ENCODE measurements at regions of chrX and their contacts with region 1.

Region 1: GRCh38 chrX:24498975-24499374 is 33.9 kb downstream of the PDK3 start:
- DNase-seq: peak; percentile 43
- H3K4me3 Mint-ChIP-seq: no peak overlapping the region
- H3K27ac Mint-ChIP-seq: no peak overlapping the region
- H3K4me1 Mint-ChIP-seq: no peaks in the 10 kb centered on the region
- H3K27me3 Mint-ChIP-seq: peaks cover 31% of the 10 kb centered on the region
- CTCF ChIP-seq: peak; percentile 63

Region 2: DNA sequence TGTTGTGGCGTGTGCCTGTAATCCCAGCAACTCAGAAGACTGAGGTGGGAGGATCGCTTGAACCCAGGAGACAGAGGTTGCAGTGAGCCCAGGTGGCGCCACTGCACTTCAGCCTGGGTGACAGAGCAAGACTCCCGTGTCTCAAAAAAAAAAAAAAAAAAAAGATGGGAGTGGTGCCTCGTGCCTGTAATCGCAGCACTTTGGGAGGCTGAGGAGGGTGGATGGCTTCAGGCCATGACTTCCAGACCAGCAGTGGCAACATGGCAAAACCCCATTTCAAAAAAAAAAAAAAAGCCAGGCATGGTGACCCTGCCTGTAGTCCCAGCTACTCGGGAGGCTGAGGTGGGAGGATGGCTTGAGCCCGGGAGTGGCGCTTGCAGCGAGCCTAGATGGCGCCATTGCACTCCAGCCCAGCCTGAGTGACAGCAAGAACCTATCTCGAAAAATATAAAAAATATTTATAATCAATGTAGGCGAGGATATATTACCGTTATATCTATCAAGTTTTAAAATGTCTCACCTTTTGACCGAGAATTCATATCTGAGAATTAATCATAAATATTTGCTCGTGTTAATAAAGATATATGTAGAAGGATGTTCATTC is 417.2 kb before region 1 on chrX:
- CTCF ChIA-PET with region 1: no interaction called
- POLR2A ChIA-PET with region 1: no interaction called
- intact Hi-C with region 1: loop called (anchors 2 kb)
- DNase-seq: peak; percentile 84
- H3K4me3 Mint-ChIP-seq: peak overlapping the region; percentile 21
- H3K27ac Mint-ChIP-seq: no peak overlapping the region
- H3K4me1 Mint-ChIP-seq: no peaks in the 10 kb centered on the region
- H3K27me3 Mint-ChIP-seq: no peaks in the 10 kb centered on the region
- CTCF ChIP-seq: peak; percentile 65

Region 3: GRCh38 chrX:24259544-24260240 is 239.3 kb before region 1 on chrX:
- CTCF ChIA-PET with region 1: interaction called, 43 read pairs
- POLR2A ChIA-PET with region 1: interaction called, 8 read pairs
- intact Hi-C with region 1: loop called (anchors 1 kb)
- DNase-seq: peak; percentile 81
- H3K4me3 Mint-ChIP-seq: no peak overlapping the region
- H3K27ac Mint-ChIP-seq: no peak overlapping the region
- H3K4me1 Mint-ChIP-seq: no peaks in the 10 kb centered on the region
- H3K27me3 Mint-ChIP-seq: peaks cover 78% of the 10 kb centered on the region
- CTCF ChIP-seq: peak; percentile 69

Region 4: DNA sequence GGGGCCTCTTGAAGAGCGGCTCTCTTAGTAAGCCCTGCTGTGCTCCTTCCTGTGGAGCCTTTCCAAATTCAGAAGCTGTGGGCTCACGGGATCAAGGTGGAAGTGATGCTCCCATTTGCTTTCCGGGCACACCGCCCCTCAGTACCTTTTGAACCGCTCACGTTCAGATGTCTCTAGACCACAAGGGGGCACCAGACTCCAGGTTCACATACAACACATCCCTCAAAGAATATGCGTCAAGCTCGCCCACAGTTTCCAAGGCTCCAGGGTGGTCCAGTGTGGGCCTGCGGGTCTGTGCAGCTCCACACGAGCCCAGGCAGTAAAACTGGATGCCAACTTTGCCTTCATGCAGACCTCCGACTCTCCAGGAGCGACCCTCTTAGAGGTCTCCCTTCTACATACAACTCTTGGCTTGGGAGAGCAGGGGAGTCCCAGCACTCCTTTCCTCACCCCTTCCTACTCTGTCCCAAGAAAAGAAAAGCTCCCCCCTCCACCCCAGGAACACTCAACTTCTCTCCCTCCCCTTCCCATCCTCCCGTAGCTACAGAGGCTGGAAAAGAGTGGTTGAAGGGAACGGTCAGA is 127.5 kb before region 1 on chrX:
- CTCF ChIA-PET with region 1: interaction called, 18 read pairs
- POLR2A ChIA-PET with region 1: no interaction called
- intact Hi-C with region 1: no loop called
- DNase-seq: peak; percentile 74
- H3K4me3 Mint-ChIP-seq: no peak overlapping the region
- H3K27ac Mint-ChIP-seq: no peak overlapping the region
- H3K4me1 Mint-ChIP-seq: no peaks in the 10 kb centered on the region
- H3K27me3 Mint-ChIP-seq: peaks cover 29% of the 10 kb centered on the region
- CTCF ChIP-seq: peak; percentile 75

Region 5: GRCh38 chrX:24387724-24388123 is 111.3 kb before region 1 on chrX:
- CTCF ChIA-PET with region 1: interaction called, 310 read pairs
- POLR2A ChIA-PET with region 1: no interaction called
- intact Hi-C with region 1: no loop called
- DNase-seq: no peak
- H3K4me3 Mint-ChIP-seq: no peak overlapping the region
- H3K27ac Mint-ChIP-seq: no peak overlapping the region
- H3K4me1 Mint-ChIP-seq: no peaks in the 10 kb centered on the region
- H3K27me3 Mint-ChIP-seq: peaks cover 100% of the 10 kb centered on the region
- CTCF ChIP-seq: no peak

Region 6: DNA sequence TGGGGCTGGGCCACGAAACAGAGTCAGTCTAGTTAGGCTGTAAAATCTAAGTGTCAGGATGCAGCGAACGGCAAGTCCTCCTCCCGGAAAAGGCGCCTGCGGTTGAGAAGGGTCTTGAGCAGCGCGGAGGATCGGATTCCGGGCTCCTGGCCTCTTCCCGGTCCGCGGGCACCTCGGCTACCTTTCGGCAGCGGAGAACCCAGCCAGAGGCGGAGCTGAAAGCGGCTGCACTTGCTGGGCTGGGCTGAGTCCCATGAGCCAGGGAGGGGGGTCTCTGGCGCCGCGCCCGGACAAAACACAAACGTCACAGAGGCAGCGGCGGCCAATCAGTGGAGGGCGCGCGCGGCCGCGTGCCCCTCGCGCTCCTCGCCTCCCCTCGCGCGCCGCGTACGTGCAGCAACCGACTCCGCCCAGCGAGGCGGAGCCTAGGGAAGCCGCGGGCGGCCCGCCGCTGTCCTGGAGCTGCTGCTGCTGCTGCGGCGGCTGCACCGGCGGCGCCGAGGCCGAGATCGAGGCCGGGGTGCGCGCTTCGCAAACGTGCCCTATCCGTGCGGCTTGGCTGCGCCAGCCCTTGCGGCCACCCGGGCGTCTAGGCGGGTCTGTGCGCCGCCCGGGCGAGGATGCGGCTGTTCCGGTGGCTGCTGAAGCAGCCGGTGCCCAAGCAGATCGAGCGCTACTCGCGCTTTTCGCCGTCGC is 34.0 kb before region 1 on chrX and contains the start of gene PDK3:
- CTCF ChIA-PET with region 1: interaction called, 17 read pairs
- POLR2A ChIA-PET with region 1: interaction called, 15 read pairs
- intact Hi-C with region 1: loop called (anchors 2 kb)
- DNase-seq: peak; percentile 84
- H3K4me3 Mint-ChIP-seq: peak within 1 kb of the TSS; percentile 73
- H3K27ac Mint-ChIP-seq: no peak within 1 kb of the TSS
- H3K4me1 Mint-ChIP-seq: no peaks in the 10 kb centered on the region
- H3K27me3 Mint-ChIP-seq: peaks cover 34% of the 10 kb centered on the region
- CTCF ChIP-seq: no peak
- total RNA-seq, gene PDK3: 1.0 and 1.4 TPM in 2 replicates

Region 7: GRCh38 chrX:24520472-24520871 is 21.5 kb after region 1 on chrX:
- CTCF ChIA-PET with region 1: interaction called, 12 read pairs
- POLR2A ChIA-PET with region 1: no interaction called
- intact Hi-C with region 1: no loop called
- DNase-seq: no peak
- H3K4me3 Mint-ChIP-seq: no peak overlapping the region
- H3K27ac Mint-ChIP-seq: no peak overlapping the region
- H3K4me1 Mint-ChIP-seq: no peaks in the 10 kb centered on the region
- H3K27me3 Mint-ChIP-seq: peaks cover 62% of the 10 kb centered on the region
- CTCF ChIP-seq: no peak

Region 8: DNA sequence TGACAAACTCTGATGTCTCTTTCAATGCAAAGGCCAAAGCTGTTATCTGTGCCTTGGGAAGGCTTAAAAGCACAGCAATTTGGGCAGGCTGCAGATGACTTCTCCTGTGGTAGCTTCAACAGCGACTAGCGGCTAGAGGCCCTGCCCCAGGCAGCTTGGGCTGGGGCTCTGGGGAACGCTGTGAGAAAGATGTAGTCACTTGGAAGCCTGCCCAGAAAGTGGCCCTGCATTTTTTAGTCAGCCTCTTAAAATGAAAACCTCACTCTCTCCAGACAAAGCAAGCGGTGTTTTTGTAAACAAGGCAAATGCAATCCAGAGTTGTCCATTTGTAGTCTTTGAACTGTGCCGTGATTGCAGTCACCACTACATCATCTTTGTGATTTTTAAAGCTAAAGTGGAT is 120.7 kb after region 1 on chrX:
- CTCF ChIA-PET with region 1: no interaction called
- POLR2A ChIA-PET with region 1: no interaction called
- intact Hi-C with region 1: no loop called
- DNase-seq: peak; percentile 60
- H3K4me3 Mint-ChIP-seq: no peak overlapping the region
- H3K27ac Mint-ChIP-seq: no peak overlapping the region
- H3K4me1 Mint-ChIP-seq: no peaks in the 10 kb centered on the region
- H3K27me3 Mint-ChIP-seq: peaks cover 68% of the 10 kb centered on the region
- CTCF ChIP-seq: no peak

Measured in MCF 10A (cell line).